Dorsolateral prefrontal cortex (tissue), 120 donors: ENCODE measurements at regions of chr18 and their contacts with region 1.

Region 1: GRCh38 chr18:55781481-55781957 is 193.5 kb upstream of the TCF4 start:
- DNase-seq: peak; percentile 42 to 83 (median 65)
- H3K4me3 ChIP-seq: peak overlapping the region in 6 of 59 donors; percentile 8 to 83 (median 15)
- H3K27ac ChIP-seq: peak overlapping the region in 57 of 59 donors; percentile 7 to 96 (median 92)
- H3K27me3 ChIP-seq: no peaks in the 10 kb centered on the region
- CTCF ChIP-seq: peak; percentile 51 to 90 (median 78)

Region 2: DNA sequence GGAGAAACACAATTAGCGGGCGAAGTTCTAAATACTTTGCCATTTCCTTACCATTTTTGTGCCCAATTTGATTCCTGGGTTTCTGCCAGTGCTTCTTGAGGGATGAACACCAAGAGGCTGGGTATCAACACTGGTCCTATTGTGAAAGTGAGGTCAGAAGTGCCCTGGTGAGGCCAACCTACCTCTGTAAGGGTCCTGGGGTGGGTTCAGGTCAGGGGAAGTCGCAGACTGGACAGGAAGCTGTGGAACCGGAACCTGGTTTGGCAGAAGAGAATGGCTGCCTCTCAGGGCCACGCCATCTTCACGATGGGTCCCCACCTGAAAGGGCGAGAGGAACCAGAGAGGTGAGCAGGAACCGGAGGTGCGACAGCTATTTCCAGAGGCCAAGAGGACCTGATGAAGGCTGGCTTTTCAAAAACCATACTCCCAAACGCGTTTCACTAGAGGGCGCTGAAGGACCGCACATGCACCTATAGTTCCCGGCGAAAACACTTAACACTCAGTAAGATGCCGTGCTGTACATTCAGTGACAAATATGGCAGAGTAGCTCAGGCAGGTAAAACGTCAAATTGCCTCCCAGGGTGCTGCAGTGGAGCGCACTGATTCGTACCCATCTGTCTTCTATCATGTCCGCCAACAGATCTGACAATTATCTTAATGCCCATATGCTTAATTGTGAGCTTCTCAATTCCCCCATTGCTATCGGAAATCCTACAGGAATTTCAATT is 547.0 kb before region 1 on chr18:
- intact Hi-C with region 1: loop called (anchors 2 kb)
- DNase-seq: peak; percentile 75 to 91 (median 84)
- H3K4me3 ChIP-seq: peak overlapping the region in 31 of 59 donors; percentile 2 to 46 (median 21)
- H3K27ac ChIP-seq: peak overlapping the region in 58 of 59 donors; percentile 32 to 89 (median 74)
- H3K27me3 ChIP-seq: no peaks in the 10 kb centered on the region
- CTCF ChIP-seq: peak; percentile 60 to 93 (median 87)

Region 3: GRCh38 chr18:55343396-55344073 is 438.0 kb before region 1 on chr18:
- intact Hi-C with region 1: loop called in 1 of 2 experiments (anchors 5 kb)
- DNase-seq: no peak
- H3K4me3 ChIP-seq: peak overlapping the region in 22 of 59 donors; percentile 0 to 62 (median 14)
- H3K27ac ChIP-seq: peak overlapping the region; percentile 27 to 100 (median 95)
- H3K27me3 ChIP-seq: no peaks in the 10 kb centered on the region
- CTCF ChIP-seq: peak; percentile 53 to 84 (median 74)

Region 4: GRCh38 chr18:55415258-55415871 is 366.2 kb before region 1 on chr18:
- intact Hi-C with region 1: loop called (anchors 2 to 5 kb)
- DNase-seq: peak; percentile 85 to 95 (median 90)
- H3K4me3 ChIP-seq: peak overlapping the region in 2 of 59 donors; percentile 4 to 8
- H3K27ac ChIP-seq: peak overlapping the region in 53 of 59 donors; percentile 0 to 99 (median 81)
- H3K27me3 ChIP-seq: no peaks in the 10 kb centered on the region
- CTCF ChIP-seq: peak; percentile 86 to 99 (median 95)

Region 5: DNA sequence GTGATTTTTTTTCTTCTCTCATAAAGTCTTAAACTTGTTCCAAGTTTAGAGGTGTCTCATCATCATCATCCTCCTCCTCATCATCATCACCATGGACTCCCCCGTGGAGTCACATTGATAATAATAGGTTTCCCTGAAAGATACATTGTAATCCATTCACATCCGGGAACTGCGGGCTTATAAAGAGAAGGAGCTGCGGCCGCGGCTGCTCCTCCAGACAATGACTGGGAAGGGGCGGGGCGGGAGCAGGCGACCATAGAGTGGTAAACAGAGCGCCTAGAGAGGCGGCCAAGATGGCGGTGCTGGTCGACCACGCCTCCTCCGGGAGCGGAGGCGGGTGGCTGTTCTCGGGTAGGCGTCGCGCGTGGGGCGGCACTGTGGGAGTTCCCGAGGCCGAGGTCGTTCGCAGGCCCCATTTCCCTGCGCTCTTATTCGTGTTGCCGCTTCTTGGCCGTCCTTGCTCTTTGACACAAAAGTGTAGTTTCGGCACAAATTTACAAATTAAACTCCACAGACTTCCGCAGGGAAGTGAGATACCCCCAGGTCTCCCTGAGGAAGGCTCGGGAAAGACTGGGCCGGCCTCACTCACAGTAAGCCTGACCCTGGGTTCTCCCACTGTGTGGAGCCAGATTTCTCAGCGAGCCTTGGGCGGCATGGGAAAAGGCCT is 191.8 kb before region 1 on chr18:
- intact Hi-C with region 1: loop called (anchors 2 kb)
- DNase-seq: peak; percentile 92 to 96 (median 94)
- H3K4me3 ChIP-seq: peak overlapping the region; percentile 50 to 86 (median 72)
- H3K27ac ChIP-seq: peak overlapping the region; percentile 71 to 99 (median 96)
- H3K27me3 ChIP-seq: no peaks in the 10 kb centered on the region
- CTCF ChIP-seq: peak in 50 of 56 donors; percentile 4 to 63 (median 46)

Region 6: DNA sequence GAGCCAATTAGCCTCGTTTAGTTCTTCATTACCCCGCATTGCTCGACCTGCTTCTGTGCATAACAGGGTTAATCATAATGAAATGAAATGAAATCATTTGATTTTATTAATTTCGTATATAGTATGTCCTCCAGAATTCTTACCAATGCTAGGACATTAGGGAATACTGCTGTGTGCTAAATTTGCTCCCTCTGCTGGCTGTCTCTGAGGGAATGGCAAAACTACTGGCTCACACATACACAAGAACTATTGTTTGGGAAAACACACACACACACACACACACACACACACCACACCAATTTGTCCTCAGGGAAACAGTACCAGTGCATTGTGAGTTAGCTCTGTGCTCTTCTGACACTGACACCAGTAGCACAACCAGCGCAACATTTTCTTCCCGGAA is 79.7 kb after region 1 on chr18:
- intact Hi-C with region 1: loop called (anchors 5 kb)
- DNase-seq: peak in 5 of 10 donors; percentile 13 to 76 (median 58)
- H3K4me3 ChIP-seq: peak overlapping the region in 2 of 59 donors; percentile 11 to 14
- H3K27ac ChIP-seq: peak overlapping the region in 52 of 59 donors; percentile 3 to 85 (median 74)
- H3K27me3 ChIP-seq: no peaks in the 10 kb centered on the region
- CTCF ChIP-seq: peak; percentile 31 to 71 (median 57)

Region 7: GRCh38 chr18:56575819-56576663 is 794.5 kb after region 1 on chr18:
- intact Hi-C with region 1: loop called (anchors 5 to 10 kb)
- DNase-seq: peak in 1 of 10 donors; percentile 11
- H3K4me3 ChIP-seq: peak overlapping the region in 11 of 59 donors; percentile 1 to 41 (median 14)
- H3K27ac ChIP-seq: peak overlapping the region in 18 of 59 donors; percentile 3 to 57 (median 21)
- H3K27me3 ChIP-seq: no peaks in the 10 kb centered on the region
- CTCF ChIP-seq: peak; percentile 69 to 94 (median 83)